ENCODE measurements at regions of chr7 and their contacts with region 1.

Region 1: DNA sequence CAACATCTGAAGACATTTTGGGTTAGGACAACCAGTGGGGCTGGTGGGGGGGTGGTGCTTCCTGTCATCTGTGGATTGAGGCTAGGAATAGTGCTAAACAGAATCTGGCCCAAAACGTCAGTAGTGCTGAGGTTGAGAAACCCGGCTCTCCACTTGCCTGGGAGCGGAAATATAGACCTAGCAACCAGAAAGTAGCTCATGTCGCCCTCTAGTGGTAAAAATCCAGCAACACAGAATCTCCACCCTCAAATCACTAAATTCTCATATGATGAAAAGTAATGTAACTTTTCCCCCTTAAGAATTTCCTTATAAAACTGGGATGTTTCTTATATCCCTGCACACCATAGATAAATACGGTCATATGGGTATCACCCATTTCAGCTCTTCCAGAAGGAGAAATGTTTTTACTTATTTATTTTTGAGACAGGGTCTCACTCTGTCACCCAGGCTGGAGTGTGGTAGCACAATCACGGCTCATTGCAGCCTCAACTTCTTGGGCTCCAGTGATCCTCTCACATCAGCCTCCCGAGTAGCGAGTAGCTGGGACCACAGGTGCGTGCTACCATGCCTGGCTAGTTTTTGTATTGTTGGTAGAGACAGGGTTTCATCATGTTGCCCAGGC is 34.4 kb downstream of the ZC3HAV1 start:
- DNase-seq: peak; percentile 78 to 88 (median 82)
- H3K4me3 ChIP-seq: peak overlapping the region in 1 of 7 experiments; percentile 28
- H3K27ac ChIP-seq: no peak overlapping the region
- H3K4me1 ChIP-seq: peaks cover 10 to 43% (median 20%) of the 10 kb centered on the region in 4 experiments
- H3K27me3 ChIP-seq: no peaks in the 10 kb centered on the region

Region 2: DNA sequence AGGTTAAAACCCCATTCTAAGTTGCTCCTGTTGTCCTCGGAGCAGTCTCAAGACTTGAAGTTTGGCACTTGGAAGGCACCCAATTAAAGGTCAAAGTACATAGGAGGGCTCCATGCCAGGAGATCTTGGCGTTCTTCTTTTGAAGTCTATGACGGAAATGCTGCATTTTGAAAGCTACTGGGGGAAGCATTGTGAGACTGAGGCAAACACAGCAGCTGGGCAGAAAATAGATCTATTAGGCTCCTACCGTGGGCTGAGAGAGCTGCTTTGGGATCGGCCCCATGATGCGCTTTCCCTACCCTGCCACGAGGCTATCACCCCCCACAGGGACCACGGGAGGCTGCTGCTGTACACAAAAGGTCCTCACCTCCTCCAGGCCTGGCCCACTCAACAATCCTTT is 114.0 kb before region 1 on chr7:
- CTCF ChIA-PET with region 1: no interaction called
- POLR2A ChIA-PET with region 1: no interaction called
- DNase-seq: no peak
- H3K4me3 ChIP-seq: no peak overlapping the region
- H3K27ac ChIP-seq: no peak overlapping the region
- H3K4me1 ChIP-seq: peaks cover 0 to 18% (median 15%) of the 10 kb centered on the region in 4 experiments
- H3K27me3 ChIP-seq: no peaks in the 10 kb centered on the region

Region 3: DNA sequence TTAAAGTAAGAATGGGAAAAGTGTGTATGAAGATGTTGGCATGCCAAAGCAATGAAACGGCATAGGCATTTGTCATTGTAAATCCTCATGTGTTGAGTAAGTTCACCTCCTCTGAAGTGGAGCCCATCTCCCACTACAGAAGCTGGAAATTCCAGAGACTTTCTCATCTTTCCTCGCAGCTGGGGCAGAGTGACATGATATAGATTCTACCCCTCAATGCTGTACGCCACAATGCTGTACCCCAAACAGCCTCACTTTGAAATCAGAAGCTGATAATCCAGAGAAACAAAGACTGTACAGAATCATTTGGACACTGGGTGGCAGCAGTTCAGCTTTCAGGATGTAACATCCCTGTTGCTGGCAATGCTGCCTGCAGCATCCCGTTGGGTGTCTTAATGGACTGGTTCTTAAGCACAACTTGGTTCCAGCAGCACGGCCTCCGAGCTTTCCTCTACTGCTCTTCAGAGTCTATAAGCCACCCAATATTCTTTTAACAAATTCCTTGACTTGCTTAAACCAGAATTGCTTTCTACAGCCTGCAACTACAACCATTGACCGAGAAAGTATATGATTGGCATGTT is 58.1 kb before region 1 on chr7:
- CTCF ChIA-PET with region 1: interaction called, 49 read pairs
- POLR2A ChIA-PET with region 1: no interaction called
- DNase-seq: peak; percentile 69 to 79 (median 78)
- H3K4me3 ChIP-seq: no peak overlapping the region
- H3K27ac ChIP-seq: no peak overlapping the region
- H3K4me1 ChIP-seq: no peaks in the 10 kb centered on the region
- H3K27me3 ChIP-seq: peaks cover 0 to 2% (median 0%) of the 10 kb centered on the region in 5 experiments

Region 4: GRCh38 chr7:139058943-139059342 is 16.2 kb before region 1 on chr7:
- CTCF ChIA-PET with region 1: interaction called, 15 read pairs
- POLR2A ChIA-PET with region 1: no interaction called
- DNase-seq: no peak
- H3K4me3 ChIP-seq: no peak overlapping the region
- H3K27ac ChIP-seq: no peak overlapping the region
- H3K4me1 ChIP-seq: peaks cover 0 to 8% (median 5%) of the 10 kb centered on the region in 4 experiments
- H3K27me3 ChIP-seq: no peaks in the 10 kb centered on the region

Region 5: GRCh38 chr7:139095194-139095659 is 20.1 kb after region 1 on chr7:
- CTCF ChIA-PET with region 1: interaction called, 20 read pairs
- POLR2A ChIA-PET with region 1: interaction called, 3 read pairs
- DNase-seq: peak; percentile 87 to 97 (median 95)
- H3K4me3 ChIP-seq: peak overlapping the region in 6 of 7 experiments; percentile 24 to 67 (median 52)
- H3K27ac ChIP-seq: peak overlapping the region; percentile 57 to 77
- H3K4me1 ChIP-seq: peaks cover 25 to 74% (median 53%) of the 10 kb centered on the region in 4 experiments
- H3K27me3 ChIP-seq: no peaks in the 10 kb centered on the region

Region 6: GRCh38 chr7:140005754-140006503 is 930.8 kb after region 1 on chr7:
- CTCF ChIA-PET with region 1: no interaction called
- POLR2A ChIA-PET with region 1: no interaction called
- DNase-seq: no peak
- H3K4me3 ChIP-seq: no peak overlapping the region
- H3K27ac ChIP-seq: no peak overlapping the region
- H3K4me1 ChIP-seq: no peaks in the 10 kb centered on the region
- H3K27me3 ChIP-seq: no peaks in the 10 kb centered on the region

Measured in common myeloid progenitor, CD34-positive (primary cell).